Posterior vena cava (tissue), 2 donors: ENCODE measurements at regions of chr5 and their contacts with region 1.

Region 1: GRCh38 chr5:17189381-17190036 is 27.9 kb upstream of the BASP1 start:
- DNase-seq: peak; percentile 85

Region 2: GRCh38 chr5:16784843-16785791 is 404.4 kb before region 1 on chr5:
- intact Hi-C with region 1: loop called (anchors 5 kb)
- DNase-seq: no peak

Region 3: GRCh38 chr5:16791036-16791705 is 398.3 kb before region 1 on chr5:
- intact Hi-C with region 1: loop called (anchors 5 kb)
- DNase-seq: no peak